ENCODE measurements at regions of chr12 and their contacts with region 1.

Region 1: DNA sequence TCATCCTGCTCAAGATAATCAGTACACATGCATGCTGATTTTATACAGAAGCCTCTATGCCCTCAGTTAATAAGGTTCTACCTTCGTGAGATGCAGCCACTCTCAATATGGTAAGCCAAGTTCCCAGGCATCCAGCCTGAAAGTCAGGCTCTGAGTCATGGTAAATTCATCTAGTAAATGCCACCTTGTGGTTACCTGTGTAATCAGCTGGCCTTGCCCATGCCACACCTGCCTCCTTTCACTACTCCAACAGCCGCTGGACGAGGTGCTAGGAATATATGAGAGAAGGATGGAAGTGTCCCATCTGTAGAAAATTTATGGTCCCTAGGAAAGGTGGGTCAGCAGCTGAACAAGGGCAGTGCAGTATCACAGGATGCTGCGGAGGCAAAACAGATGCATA is 207.3 kb downstream of the SSPN start:
- DNase-seq: peak; percentile 94
- H3K4me3 ChIP-seq: no peak overlapping the region
- H3K27ac ChIP-seq: no peak overlapping the region
- H3K4me1 ChIP-seq: peaks cover 14% of the 10 kb centered on the region
- H3K27me3 ChIP-seq: no peaks in the 10 kb centered on the region
- CTCF ChIP-seq: peak; percentile 39 to 57

Region 2: GRCh38 chr12:26162905-26163304 is 239.7 kb before region 1 on chr12:
- CTCF ChIA-PET with region 1: no interaction called
- dilution Hi-C with region 1: no loop called
- in situ Hi-C with region 1: no loop called
- intact Hi-C with region 1: loop called (anchors 5 kb)
- DNase-seq: no peak
- H3K4me3 ChIP-seq: no peak overlapping the region
- H3K27ac ChIP-seq: no peak overlapping the region
- H3K4me1 ChIP-seq: peaks cover 11% of the 10 kb centered on the region
- H3K27me3 ChIP-seq: no peaks in the 10 kb centered on the region
- CTCF ChIP-seq: no peak

Region 3: GRCh38 chr12:26195641-26196420 is 206.8 kb before region 1 on chr12:
- CTCF ChIA-PET with region 1: no interaction called
- dilution Hi-C with region 1: no loop called
- in situ Hi-C with region 1: no loop called
- intact Hi-C with region 1: loop called (anchors 10 kb)
- DNase-seq: peak; percentile 70
- H3K4me3 ChIP-seq: peak overlapping the region; percentile 12 to 51 (median 44)
- H3K27ac ChIP-seq: peak overlapping the region; percentile 42
- H3K4me1 ChIP-seq: peaks cover 28% of the 10 kb centered on the region
- H3K27me3 ChIP-seq: no peaks in the 10 kb centered on the region
- CTCF ChIP-seq: no peak

Region 4: DNA sequence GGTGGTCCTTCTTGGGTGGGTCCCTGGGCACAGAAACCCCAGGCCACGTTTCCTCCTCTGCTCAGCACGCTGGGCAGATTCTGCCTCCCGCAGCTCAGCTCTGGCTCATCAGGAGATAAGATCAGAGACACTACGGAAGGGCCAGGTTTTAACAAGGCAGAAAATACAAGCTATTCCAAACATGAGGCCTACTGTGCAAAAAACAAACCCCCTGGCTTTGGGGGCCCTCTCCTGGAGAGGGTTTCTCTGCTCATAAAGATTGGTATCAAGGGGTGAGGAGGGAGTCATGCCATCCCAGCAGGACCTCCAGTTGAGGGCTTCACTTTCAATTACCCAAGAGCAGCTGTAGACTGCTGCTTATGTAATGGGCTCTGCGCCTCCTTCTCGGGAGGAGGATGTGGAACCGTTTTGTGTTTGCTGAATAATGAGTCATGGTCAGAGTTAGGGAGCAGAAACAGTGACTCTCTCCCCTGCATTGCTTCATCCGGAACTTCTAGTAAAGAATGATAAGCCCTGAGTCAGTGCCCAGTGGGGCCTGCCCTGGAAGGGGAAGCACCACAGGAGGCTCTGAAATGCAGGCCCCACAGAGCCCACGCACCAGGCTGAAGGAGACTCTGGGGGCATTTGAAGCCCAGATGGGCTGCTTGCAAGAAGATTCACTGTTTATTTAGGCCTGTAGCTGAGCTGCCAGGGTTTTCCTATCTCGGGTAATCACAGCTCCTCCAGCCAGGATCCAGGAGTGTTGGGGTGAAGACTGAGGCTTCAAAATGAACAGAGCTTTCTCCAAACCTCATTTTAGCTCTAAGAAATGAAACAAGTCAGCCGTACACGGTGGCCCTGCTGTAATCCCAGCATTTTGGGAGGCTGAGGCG is 128.0 kb before region 1 on chr12:
- CTCF ChIA-PET with region 1: no interaction called
- dilution Hi-C with region 1: no loop called
- in situ Hi-C with region 1: no loop called
- intact Hi-C with region 1: loop called (anchors 5 kb)
- DNase-seq: peak; percentile 100
- H3K4me3 ChIP-seq: no peak overlapping the region
- H3K27ac ChIP-seq: peak overlapping the region; percentile 87
- H3K4me1 ChIP-seq: peaks cover 63% of the 10 kb centered on the region
- H3K27me3 ChIP-seq: no peaks in the 10 kb centered on the region
- CTCF ChIP-seq: peak in 1 of 2 donors; percentile 29